IMR-90 (cell line): ENCODE measurements at regions of chr3 and their contacts with region 1.

Region 1: DNA sequence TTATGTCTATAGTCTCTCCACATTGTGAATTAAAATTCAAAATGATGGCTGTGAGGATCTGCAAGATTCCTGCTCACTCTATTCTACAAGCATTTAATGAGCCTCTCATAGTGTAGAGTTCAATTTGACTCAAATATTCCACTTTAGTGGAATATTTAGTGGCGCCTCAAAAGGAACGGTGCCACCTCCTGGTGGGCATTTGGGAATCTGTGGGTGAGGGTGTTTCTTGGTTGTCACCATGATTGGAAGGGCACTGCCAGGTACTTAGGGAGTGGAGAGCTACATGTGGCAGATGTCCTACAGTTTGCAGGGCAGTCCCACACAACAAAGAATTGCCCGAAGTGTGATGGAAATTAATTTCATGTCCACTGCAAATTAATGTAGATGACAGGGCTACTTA is 21.5 kb upstream of the KCNMB3 start:
- DNase-seq: peak; percentile 8
- ATAC-seq: no peak
- H3K4me3 ChIP-seq: no peak overlapping the region; the same call in 1 of the 2 replicates
- H3K27ac ChIP-seq: no peak overlapping the region
- H3K4me1 ChIP-seq: peaks cover 2% of the 10 kb centered on the region; the same call in 1 of the 2 replicates
- H3K27me3 ChIP-seq: 0 out of 2 replicates have a peak, but pooled peaks cover 1% of the 10 kb centered on the region
- CTCF ChIP-seq: peak; percentile 38
- POLR2A ChIP-seq: no peak
- RAD21 ChIP-seq: peak; percentile 42

Region 2: GRCh38 chr3:178420033-178420432 is 852.4 kb before region 1 on chr3:
- CTCF ChIA-PET with region 1: no interaction called
- POLR2A ChIA-PET with region 1: no interaction called
- dilution Hi-C with region 1: no loop called
- in situ Hi-C with region 1: no loop called
- intact Hi-C with region 1: loop called (anchors 10 kb)
- DNase-seq: no peak
- ATAC-seq: no peak
- H3K4me3 ChIP-seq: no peak overlapping the region
- H3K27ac ChIP-seq: no peak overlapping the region
- H3K4me1 ChIP-seq: no peaks in the 10 kb centered on the region
- H3K27me3 ChIP-seq: no peaks in the 10 kb centered on the region
- CTCF ChIP-seq: no peak
- POLR2A ChIP-seq: no peak
- RAD21 ChIP-seq: no peak